B cell (primary cell): ENCODE measurements at regions of chr14 and their contacts with region 1.

Region 1: DNA sequence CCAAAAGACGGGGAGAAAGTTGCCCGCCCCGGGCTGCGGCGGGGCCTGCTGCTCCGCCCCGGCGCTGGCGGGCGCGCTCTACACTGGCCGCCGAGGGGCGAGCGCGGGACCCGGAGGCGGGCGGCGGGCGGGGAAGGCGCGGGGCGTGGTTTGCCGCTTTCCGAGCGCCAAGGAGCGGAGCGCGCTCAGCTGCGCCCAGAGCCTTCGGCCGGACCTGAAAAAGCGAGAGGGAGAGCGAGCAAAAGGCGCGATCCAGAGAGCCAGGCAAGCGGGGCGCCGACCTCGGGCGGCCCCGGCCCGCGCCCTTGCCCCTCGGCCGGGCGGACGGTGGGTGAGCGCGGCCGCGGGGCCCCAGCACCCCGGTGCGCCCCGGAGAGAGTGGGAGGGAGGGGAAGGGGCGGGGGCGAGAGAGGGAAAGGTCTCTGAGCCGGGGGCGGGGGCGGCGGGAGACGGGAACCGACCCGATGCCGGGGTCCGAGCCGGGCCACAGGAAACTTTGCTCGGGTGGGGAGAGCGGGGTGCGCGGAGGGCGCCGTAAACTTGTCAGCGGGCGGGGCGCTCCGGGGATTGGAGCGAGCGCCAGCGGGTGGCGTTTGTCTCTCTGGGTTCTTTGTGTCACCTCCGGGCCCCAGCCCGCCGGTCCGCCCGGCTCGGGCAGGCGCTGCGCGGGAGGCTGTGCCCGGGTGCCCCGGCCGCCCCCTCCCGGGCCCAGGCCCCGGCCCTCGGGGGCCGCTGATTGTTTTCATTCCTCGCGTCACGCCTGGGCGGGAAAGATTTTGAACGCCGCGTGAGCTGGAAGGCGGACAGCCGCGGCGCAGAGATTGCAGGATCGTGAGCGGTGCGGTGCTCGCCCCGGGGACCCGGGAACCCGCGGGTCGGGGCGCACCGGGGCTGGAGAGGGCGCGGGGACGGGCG is at the start of gene SYNE2:
- DNase-seq: peak; percentile 89
- ATAC-seq: peak; percentile 84
- H3K4me3 ChIP-seq: peak within 1 kb of the TSS; percentile 46 to 72 (median 64)
- H3K4me3 Mint-ChIP-seq: peak within 1 kb of the TSS; percentile 94
- H3K27ac ChIP-seq: peak within 1 kb of the TSS; percentile 30 to 43
- H3K27ac Mint-ChIP-seq: peak within 1 kb of the TSS; percentile 95
- H3K4me1 ChIP-seq: peaks cover 13 to 14% of the 10 kb centered on the region in 2 donors
- H3K4me1 Mint-ChIP-seq: peaks cover 27% of the 10 kb centered on the region
- H3K27me3 ChIP-seq: peaks cover 0 to 6% (median 0%) of the 10 kb centered on the region in 4 experiments
- H3K27me3 Mint-ChIP-seq: no peaks in the 10 kb centered on the region
- CTCF ChIP-seq: peak; percentile 33
- total RNA-seq, gene SYNE2: 105 TPM in 2 replicates

Region 2: GRCh38 chr14:63867933-63868921 is 15.2 kb after region 1 on chr14:
- CTCF ChIA-PET with region 1: interaction called, 12 read pairs
- POLR2A ChIA-PET with region 1: interaction called, 9 read pairs
- intact Hi-C with region 1: loop called (anchors 1 kb)
- DNase-seq: peak; percentile 70
- ATAC-seq: peak; percentile 37
- H3K4me3 ChIP-seq: peak overlapping the region in 1 of 5 experiments; percentile 31
- H3K4me3 Mint-ChIP-seq: peak overlapping the region; percentile 59
- H3K27ac ChIP-seq: peak overlapping the region; percentile 53 to 74
- H3K27ac Mint-ChIP-seq: peak overlapping the region; percentile 83
- H3K4me1 ChIP-seq: peaks cover 50 to 64% of the 10 kb centered on the region in 2 donors
- H3K4me1 Mint-ChIP-seq: peaks cover 56% of the 10 kb centered on the region
- H3K27me3 ChIP-seq: no peaks in the 10 kb centered on the region
- H3K27me3 Mint-ChIP-seq: no peaks in the 10 kb centered on the region
- CTCF ChIP-seq: no peak

Region 3: GRCh38 chr14:63901434-63902085 is 48.5 kb after region 1 on chr14:
- CTCF ChIA-PET with region 1: no interaction called
- POLR2A ChIA-PET with region 1: no interaction called
- intact Hi-C with region 1: loop called (anchors 10 kb)
- DNase-seq: no peak
- ATAC-seq: no peak
- H3K4me3 ChIP-seq: no peak overlapping the region
- H3K4me3 Mint-ChIP-seq: no peak overlapping the region
- H3K27ac ChIP-seq: no peak overlapping the region
- H3K27ac Mint-ChIP-seq: no peak overlapping the region
- H3K4me1 ChIP-seq: peaks cover 7 to 9% of the 10 kb centered on the region in 2 donors
- H3K4me1 Mint-ChIP-seq: peaks cover 17% of the 10 kb centered on the region
- H3K27me3 ChIP-seq: no peaks in the 10 kb centered on the region
- H3K27me3 Mint-ChIP-seq: no peaks in the 10 kb centered on the region
- CTCF ChIP-seq: no peak

Region 4: GRCh38 chr14:64196814-64197411 is 343.8 kb after region 1 on chr14:
- CTCF ChIA-PET with region 1: no interaction called
- POLR2A ChIA-PET with region 1: no interaction called
- intact Hi-C with region 1: no loop called
- DNase-seq: peak; percentile 84
- ATAC-seq: peak; percentile 82
- H3K4me3 ChIP-seq: peak overlapping the region in 4 of 5 experiments; percentile 40 to 53 (median 46)
- H3K4me3 Mint-ChIP-seq: peak overlapping the region; percentile 90
- H3K27ac ChIP-seq: peak overlapping the region; percentile 94 to 98
- H3K27ac Mint-ChIP-seq: peak overlapping the region; percentile 94
- H3K4me1 ChIP-seq: peaks cover 51 to 53% of the 10 kb centered on the region in 2 donors
- H3K4me1 Mint-ChIP-seq: peaks cover 57% of the 10 kb centered on the region
- H3K27me3 ChIP-seq: no peaks in the 10 kb centered on the region
- H3K27me3 Mint-ChIP-seq: no peaks in the 10 kb centered on the region
- CTCF ChIP-seq: no peak

Region 5: GRCh38 chr14:64232095-64232838 is 379.2 kb after region 1 on chr14:
- CTCF ChIA-PET with region 1: no interaction called
- POLR2A ChIA-PET with region 1: no interaction called
- intact Hi-C with region 1: loop called (anchors 1 kb)
- DNase-seq: peak; percentile 31
- ATAC-seq: peak; percentile 7
- H3K4me3 ChIP-seq: no peak overlapping the region
- H3K4me3 Mint-ChIP-seq: peak overlapping the region; percentile 73
- H3K27ac ChIP-seq: no peak overlapping the region
- H3K27ac Mint-ChIP-seq: peak overlapping the region; percentile 96
- H3K4me1 ChIP-seq: peaks cover 49 to 53% of the 10 kb centered on the region in 2 donors
- H3K4me1 Mint-ChIP-seq: peaks cover 56% of the 10 kb centered on the region
- H3K27me3 ChIP-seq: no peaks in the 10 kb centered on the region
- H3K27me3 Mint-ChIP-seq: no peaks in the 10 kb centered on the region
- CTCF ChIP-seq: no peak